Gastrocnemius medialis (tissue), 4 donors: ENCODE measurements at regions of chr22 and their contacts with region 1.

Region 1: GRCh38 chr22:43385770-43386641 is 25.8 kb upstream of the MPPED1 start:
- DNase-seq: peak; percentile 39 to 40
- ATAC-seq: peak; percentile 60 to 75
- H3K4me3 ChIP-seq: no peak overlapping the region
- H3K27ac ChIP-seq: no peak overlapping the region
- H3K4me1 ChIP-seq: no peaks in the 10 kb centered on the region
- H3K27me3 ChIP-seq: peaks cover 15 to 28% (median 17%) of the 10 kb centered on the region in 3 donors
- CTCF ChIP-seq: peak; percentile 59 to 88 (median 72)
- POLR2A ChIP-seq: no peak

Region 2: DNA sequence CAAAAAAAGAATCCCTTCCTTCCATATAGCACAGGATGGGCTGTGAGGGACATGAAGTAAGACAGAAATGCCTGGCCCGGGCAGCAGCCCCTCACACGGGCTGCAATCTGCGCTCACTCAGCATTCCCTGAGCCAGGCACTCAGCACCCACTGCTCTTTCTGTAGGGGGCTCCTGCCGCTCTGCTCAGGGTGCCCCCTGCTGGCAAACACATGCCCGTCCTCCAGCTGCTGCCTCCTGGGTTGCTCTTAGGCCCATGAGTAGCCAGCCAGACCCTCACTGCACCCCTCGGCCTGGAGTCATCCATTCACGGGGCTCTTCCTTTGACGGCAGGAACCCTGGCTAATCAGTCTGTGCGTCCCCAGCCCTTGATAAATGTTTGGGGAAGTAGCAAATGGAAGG is 249.8 kb before region 1 on chr22:
- in situ Hi-C with region 1: no loop called
- intact Hi-C with region 1: no loop called
- DNase-seq: no peak
- ATAC-seq: no peak
- H3K4me3 ChIP-seq: no peak overlapping the region
- H3K27ac ChIP-seq: no peak overlapping the region
- H3K4me1 ChIP-seq: no peaks in the 10 kb centered on the region
- H3K27me3 ChIP-seq: no peaks in the 10 kb centered on the region
- CTCF ChIP-seq: peak in 4 of 5 experiments; percentile 16 to 52 (median 30)
- POLR2A ChIP-seq: no peak

Region 3: DNA sequence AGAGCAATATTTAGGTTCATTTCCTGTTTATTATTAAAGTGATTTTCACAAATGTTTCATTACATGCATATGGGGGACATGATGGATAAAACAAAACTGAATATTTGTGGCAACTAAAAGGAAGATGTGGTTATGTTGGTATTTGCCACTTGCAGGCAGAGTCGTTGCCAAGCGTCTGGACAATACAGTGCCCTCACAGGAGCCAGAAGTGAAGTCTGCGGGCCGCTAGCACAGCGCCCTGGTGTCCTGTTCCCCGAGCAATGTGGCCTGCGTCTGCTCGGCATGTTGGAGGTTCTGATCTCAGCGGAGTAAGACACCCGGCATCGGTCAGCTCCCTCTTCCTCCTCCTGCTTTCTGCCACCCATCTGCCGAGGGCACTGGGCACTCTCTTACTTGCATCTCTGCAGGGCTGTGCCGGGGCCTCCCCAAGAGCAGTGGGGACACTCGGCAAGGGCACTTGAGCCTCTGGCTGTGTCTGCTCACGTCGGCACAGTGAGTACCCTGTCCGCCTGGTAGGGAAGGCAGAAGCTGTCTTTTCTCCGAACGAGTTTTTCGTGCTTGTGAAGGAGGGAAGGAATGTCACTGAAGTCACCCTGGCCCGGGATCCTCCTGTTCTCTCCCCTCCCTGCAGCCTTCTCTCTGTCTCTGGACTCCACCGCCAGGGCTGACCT is 188.6 kb before region 1 on chr22:
- in situ Hi-C with region 1: no loop called
- intact Hi-C with region 1: no loop called
- DNase-seq: no peak
- ATAC-seq: no peak
- H3K4me3 ChIP-seq: no peak overlapping the region
- H3K27ac ChIP-seq: no peak overlapping the region
- H3K4me1 ChIP-seq: no peaks in the 10 kb centered on the region
- H3K27me3 ChIP-seq: peaks cover 24 to 29% (median 26%) of the 10 kb centered on the region in 3 donors
- CTCF ChIP-seq: no peak
- POLR2A ChIP-seq: no peak

Region 4: DNA sequence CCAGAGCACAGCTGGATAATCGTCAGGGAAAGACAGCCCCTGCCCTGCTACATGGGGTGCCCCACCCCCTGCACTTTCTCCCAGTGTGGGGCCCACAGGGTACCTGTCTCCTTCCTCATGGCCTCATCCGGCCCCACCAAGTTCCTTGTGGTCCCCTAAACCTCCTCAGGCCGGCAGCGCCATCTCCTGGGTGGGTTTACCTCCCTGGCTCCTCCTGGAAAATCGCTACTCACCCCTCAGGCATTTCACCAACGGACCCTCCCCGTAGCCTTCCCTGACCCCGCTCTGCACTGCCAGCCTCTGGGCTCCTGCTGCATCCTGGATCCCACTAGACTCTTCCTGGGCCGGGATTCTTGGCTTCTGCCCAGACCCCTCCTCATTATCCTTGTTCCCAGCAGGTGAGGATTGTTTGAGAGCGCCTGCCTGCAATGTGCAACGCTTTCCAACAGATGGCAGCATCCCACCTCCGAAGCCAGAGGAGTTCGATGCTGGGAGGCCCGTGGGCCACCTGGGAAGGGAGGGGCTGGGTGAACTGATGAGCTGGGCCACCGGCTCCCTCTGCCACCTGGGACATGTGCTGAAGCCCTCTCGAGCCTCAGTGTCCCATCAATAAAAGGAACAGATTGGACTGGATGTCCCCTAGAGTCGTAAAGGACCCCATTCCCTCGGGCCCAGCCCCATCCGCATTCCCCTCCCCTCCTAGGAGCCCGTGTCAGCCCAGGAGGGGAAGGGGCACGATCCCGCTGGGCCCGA is 154.9 kb before region 1 on chr22:
- in situ Hi-C with region 1: no loop called
- intact Hi-C with region 1: loop called (anchors 1 kb)
- DNase-seq: no peak
- ATAC-seq: no peak
- H3K4me3 ChIP-seq: no peak overlapping the region
- H3K27ac ChIP-seq: no peak overlapping the region
- H3K4me1 ChIP-seq: no peaks in the 10 kb centered on the region
- H3K27me3 ChIP-seq: peaks cover 0 to 3% (median 0%) of the 10 kb centered on the region in 3 donors
- CTCF ChIP-seq: peak; percentile 48 to 84 (median 70)
- POLR2A ChIP-seq: no peak

Region 5: GRCh38 chr22:43273902-43274484 is 112.0 kb before region 1 on chr22:
- in situ Hi-C with region 1: no loop called
- intact Hi-C with region 1: loop called (anchors 2 kb)
- DNase-seq: peak in 1 of 2 donors; percentile 21
- ATAC-seq: peak; percentile 55 to 78
- H3K4me3 ChIP-seq: no peak overlapping the region
- H3K27ac ChIP-seq: no peak overlapping the region
- H3K4me1 ChIP-seq: no peaks in the 10 kb centered on the region
- H3K27me3 ChIP-seq: no peaks in the 10 kb centered on the region
- CTCF ChIP-seq: peak; percentile 24 to 61 (median 47)
- POLR2A ChIP-seq: no peak

Region 6: DNA sequence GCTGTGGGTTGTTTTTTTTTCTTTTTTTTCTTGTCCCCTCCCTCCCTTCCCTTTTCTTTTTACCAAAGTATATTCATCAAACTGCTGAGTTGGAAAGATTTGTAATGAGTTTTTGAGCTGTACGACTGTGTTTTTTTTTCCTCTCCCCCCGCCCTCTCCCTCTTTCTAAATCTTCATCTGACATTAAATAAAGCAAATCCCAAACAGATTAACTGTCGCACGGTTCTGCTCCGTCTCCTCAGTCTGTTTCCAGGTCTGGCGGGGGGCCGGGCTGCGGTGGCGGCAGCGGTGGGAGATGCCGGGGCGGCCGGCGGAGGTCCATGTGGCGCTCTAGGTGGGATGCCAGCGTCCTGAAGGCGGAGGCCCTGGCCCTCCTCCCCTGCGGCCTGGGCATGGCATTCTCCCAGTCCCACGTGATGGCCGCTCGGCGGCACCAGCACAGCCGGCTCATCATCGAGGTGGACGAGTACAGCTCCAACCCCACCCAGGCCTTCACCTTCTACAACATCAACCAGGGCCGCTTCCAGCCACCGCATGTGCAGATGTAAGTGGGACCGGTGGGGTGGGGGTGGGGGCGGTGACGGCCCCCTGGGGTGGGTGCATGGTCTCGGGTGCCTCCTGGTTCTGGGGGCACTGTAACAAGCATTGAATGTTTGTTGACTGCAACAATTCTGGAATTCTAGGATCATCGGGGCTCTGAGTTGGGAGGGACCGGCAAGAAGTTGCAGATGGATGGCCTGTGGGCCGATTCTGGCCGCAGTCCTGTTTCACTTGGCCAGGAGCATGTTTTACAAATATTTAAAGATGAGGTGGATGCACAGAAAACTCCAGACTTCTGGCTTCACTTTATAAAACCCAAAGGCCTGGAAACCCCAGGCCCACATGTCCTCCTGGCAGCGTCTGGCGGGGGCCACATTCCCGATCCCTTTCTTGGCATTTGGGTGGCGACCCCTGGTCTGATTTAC is 38.9 kb after region 1 on chr22:
- in situ Hi-C with region 1: no loop called
- intact Hi-C with region 1: no loop called
- DNase-seq: no peak
- ATAC-seq: no peak
- H3K4me3 ChIP-seq: no peak overlapping the region
- H3K27ac ChIP-seq: no peak overlapping the region
- H3K4me1 ChIP-seq: no peaks in the 10 kb centered on the region
- H3K27me3 ChIP-seq: peaks cover 16 to 47% (median 29%) of the 10 kb centered on the region in 3 donors
- CTCF ChIP-seq: no peak
- POLR2A ChIP-seq: no peak

Region 7: DNA sequence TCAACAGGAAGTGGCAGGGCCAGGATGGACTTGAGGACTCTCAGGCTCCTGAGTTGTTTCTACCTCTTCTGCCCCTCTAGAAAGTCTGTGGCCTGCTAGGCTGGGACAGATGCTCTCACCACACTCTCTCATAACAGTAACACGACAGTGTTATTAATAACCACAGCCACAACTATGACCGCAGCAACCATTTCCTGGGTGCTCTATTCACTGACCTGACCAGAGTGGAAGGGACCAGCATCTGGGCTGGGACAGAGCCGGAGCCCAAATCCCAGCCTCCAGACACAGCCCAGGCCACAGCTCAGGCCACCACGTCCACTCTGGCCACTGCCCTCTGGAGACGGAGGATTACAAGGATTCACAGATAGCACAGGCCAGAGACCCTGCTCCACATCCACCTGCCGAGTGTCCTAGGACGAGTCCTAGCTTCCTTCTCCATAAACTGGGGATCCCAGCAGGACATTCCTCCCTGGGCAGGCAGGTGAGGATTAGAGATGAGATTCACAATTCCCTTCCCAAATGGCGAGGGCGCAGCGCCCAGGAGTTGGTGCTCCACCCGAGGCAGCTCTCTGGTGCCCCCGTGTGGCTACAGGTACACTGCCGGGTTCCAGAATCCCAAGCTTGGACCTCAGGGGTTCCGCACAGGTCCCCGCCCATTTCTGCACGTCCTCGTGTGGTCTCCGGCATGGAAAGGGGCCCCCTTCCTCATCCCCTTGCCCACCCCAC is 498.8 kb after region 1 on chr22:
- in situ Hi-C with region 1: no loop called
- intact Hi-C with region 1: loop called (anchors 10 kb)
- DNase-seq: peak; percentile 18 to 27
- ATAC-seq: peak in 1 of 2 donors; percentile 64
- H3K4me3 ChIP-seq: no peak overlapping the region
- H3K27ac ChIP-seq: no peak overlapping the region
- H3K4me1 ChIP-seq: no peaks in the 10 kb centered on the region
- H3K27me3 ChIP-seq: peaks cover 4 to 24% (median 19%) of the 10 kb centered on the region in 3 donors
- CTCF ChIP-seq: peak in 4 of 5 experiments; percentile 33 to 75 (median 64)
- POLR2A ChIP-seq: no peak

Region 8: DNA sequence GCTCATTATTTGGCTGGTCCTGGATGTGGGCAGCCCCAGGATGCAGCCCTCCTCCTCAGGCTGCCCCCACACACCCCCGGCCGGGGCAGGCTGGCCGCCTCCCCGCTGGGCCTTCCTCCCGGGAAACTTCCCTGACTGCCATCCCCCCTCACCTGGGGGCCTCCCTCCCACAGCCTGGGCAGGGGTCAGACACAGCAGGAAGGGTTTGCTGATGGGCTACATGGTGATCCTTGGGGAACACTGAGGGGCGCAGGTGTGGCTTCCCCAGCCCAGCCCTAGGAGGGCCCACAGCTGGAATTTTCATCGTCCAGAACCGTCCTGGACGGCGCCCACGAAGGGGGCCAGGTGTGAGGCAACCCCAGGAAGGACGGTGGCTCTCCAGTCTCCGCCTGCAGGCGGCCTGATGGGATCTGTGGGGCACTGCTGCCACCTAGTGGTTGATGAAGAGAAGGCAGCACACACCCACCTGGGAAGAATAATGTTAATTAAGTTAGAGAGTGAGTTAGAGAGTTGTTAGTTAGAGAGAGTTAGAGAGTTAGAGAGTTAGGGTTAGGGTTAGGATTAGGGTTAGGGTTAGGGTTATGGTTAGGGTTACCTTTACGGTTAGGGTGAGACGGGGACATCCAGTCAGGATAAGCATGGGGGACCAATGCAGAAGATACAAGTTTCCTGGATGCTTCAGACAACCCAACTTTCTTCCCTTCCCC is 1240.1 kb after region 1 on chr22:
- in situ Hi-C with region 1: loop called in 2 of 4 experiments (anchors 25 kb)
- intact Hi-C with region 1: loop called (anchors 2 kb)
- DNase-seq: peak; percentile 14 to 28
- ATAC-seq: peak; percentile 81 to 82
- H3K4me3 ChIP-seq: no peak overlapping the region
- H3K27ac ChIP-seq: no peak overlapping the region
- H3K4me1 ChIP-seq: no peaks in the 10 kb centered on the region
- H3K27me3 ChIP-seq: peaks cover 3 to 8% (median 8%) of the 10 kb centered on the region in 3 donors
- CTCF ChIP-seq: peak; percentile 95 to 99 (median 97)
- POLR2A ChIP-seq: no peak